ENCODE measurements at regions of chr3 and their contacts with region 1.

Region 1: DNA sequence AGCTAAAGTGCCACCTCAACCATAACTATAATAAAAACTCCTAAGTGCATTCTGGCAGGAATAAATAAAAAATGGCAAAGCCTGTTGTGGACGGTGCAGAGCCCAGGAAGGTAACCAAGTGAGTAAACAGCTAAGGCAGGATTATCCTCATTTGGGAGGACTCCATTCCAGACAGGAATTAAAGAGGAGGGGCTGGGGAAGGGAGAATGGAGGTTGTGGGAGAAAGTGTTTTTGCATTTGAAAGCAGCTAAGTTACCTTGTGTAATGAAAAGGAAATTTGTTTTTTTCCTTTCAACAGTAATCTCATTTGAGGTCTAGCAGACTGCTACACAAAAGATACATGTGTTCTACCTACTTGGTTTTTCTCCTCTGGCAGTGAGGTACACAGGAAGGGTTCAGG is 248.5 kb downstream of the TIGIT start:
- DNase-seq: peak in 1 of 2 experiments; percentile 19
- H3K4me3 ChIP-seq: peak overlapping the region in 1 of 4 experiments; percentile 27; a peak in 1 of 8 replicates
- H3K27ac ChIP-seq: peak overlapping the region; percentile 5; the same call in 1 of the 2 replicates
- H3K4me1 ChIP-seq: peaks cover 0 to 20% (median 0%) of the 10 kb centered on the region in 4 experiments; a peak in 1 of 7 replicates
- H3K27me3 ChIP-seq: no peaks in the 10 kb centered on the region
- CTCF ChIP-seq: no peak
- EP300 ChIP-seq: no peak
- POLR2A ChIP-seq: no peak
- RAD21 ChIP-seq: no peak

Region 2: DNA sequence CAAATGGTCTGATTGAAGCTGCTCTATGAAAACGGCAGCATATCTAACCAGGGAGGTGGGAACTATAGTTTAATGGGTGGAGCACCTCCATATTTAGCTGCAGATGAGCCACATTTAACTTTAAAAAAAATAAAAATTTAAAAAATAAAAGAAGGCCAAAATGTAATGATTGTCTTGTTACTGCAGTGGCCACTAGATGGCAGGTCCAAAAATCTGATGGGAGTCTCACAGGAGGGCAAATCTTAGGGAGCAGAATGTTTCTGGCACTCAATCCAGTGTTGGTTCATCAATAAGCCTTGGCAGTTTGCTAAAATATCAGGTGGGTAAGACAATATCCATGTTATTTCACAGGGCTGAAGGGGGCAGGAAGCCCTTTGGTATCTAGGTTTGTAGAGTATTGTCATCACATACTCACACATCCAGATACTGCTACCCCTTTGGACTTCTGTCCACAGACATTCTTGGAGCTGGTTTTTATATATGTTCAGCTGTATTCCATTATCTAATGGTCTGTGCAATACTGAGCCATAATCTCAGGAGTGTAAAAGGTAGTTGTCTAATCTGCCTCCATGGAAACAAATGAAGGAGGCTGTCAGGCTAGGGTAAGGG is 15.2 kb before region 1 on chr3:
- CTCF ChIA-PET with region 1: interaction called, 21 read pairs
- POLR2A ChIA-PET with region 1: no interaction called
- DNase-seq: no peak
- H3K4me3 ChIP-seq: no peak overlapping the region
- H3K27ac ChIP-seq: no peak overlapping the region
- H3K4me1 ChIP-seq: no peaks in the 10 kb centered on the region
- H3K27me3 ChIP-seq: no peaks in the 10 kb centered on the region
- CTCF ChIP-seq: peak in 2 of 3 experiments; percentile 42 to 53; a peak in 2 of 4 replicates
- EP300 ChIP-seq: no peak
- POLR2A ChIP-seq: no peak
- RAD21 ChIP-seq: peak; percentile 53 to 63

Measured in H1 (cell line).